ENCODE measurements at regions of chr7 and their contacts with region 1.

Region 1: DNA sequence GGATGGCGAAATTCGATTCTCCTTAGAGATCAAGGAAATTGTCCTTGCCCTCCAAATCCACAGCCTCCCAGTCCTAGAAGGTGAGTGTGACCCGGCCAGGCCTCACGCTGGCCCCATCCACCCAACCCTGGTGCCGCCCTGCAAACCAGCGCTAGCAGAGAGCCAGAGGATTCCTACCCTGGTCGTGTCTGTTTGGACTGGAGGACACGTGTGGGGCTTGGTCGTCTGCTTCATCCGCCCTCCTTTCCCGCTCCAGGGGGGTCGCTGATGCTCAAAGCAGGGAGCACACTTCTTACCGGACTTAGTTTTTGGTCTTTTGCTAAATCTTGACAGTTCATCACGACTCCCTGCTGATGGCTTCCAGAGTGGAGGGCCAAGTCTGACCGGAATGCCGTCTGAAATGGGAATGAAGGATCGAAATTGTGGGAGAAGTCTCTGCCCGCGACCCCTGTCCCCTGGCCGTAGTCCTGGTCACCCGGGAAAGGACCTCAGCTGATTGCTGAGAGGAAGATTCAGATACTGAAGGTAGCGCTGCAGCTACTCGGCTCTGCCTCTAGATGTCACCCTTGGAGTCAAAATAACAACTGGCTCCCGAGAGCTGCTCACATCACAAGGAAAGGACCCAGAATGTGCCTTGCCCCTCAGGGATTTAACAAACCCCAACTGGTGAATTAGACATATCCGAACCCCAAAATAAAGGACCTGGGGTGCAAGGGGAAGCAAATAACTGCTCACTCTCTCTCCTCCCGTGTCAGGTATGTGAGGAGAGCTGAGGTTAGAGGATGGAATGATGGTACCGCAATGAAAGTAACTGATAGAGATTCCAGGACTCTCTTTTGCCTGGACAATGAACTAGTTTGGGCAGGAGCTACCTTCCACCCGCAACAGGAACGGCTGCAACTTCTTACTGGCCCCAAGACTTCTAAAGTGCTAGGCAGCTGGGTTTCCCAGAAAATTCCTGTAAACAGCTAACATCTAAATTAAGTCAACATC is 23.5 kb upstream of the ORC5 start:
- ATAC-seq: peak; percentile 69 to 97 (median 90)
- H3K4me3 ChIP-seq: no peak overlapping the region
- H3K27ac ChIP-seq: no peak overlapping the region
- H3K4me1 ChIP-seq: peaks cover 0 to 3% of the 10 kb centered on the region in 2 donors

Region 2: DNA sequence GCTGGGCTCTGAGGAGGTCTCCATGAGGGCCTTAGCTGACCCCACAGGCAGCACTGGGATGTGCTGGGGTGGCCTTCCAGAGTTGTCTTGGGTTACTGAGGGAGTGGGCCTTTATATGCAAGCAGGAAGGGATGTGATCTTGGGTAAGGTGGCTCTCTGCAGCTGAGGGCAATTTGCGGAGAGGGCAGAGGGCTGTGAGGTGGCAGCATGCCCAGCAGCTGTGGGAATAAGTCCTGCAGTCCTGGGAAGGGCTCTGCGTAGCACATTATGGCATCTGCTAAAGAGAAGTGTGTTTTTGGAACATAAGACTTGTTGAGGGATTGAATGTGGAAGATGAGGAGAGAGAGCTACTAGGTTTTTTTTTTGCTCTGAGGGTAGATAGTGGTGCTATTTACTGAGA is 683.1 kb after region 1 on chr7:
- in situ Hi-C with region 1: loop called in 1 of 9 experiments (anchors 10 kb)
- ATAC-seq: no peak
- H3K4me3 ChIP-seq: no peak overlapping the region
- H3K27ac ChIP-seq: no peak overlapping the region
- H3K4me1 ChIP-seq: no peaks in the 10 kb centered on the region

Measured in motor neuron (in vitro differentiated cells).